Dorsolateral prefrontal cortex (tissue), 120 donors: ENCODE measurements at regions of chr17 and their contacts with region 1.

Region 1: DNA sequence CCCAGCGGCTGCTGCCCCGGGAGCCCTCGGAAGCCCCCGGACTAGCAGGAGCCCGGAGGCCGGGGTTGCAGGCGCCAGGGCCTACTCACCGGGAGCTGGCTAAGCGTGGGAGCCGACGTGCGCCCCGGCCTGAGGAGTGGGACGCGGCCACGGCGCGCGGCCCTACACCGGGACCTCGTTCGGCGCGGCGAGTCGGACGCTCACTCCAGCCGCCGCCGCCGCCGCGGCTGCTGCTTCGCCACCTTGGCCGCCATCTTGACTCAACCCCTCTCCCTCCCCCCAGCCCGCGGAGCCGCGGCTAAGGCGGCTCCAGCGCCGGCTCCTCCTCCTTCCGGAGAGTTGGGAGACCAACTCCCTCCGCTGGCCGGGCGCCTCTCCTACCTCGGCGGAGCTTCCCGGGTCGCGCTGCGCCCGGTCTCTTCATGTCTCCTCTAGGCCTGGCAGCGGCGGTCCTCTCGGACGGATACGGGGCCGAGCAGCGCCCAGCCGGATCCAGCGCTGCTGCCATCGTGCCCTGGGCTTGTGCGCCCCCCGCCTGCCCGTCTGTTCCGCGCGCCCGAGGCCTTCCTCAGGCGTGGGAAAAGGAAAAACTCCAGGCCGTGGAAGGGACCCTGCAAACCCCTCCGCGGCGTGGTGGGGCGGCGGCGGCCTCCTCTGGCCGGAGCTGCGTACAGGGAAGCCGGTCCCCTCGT is at the start of gene NCOR1:
- DNase-seq: peak; percentile 76 to 92 (median 88)
- H3K4me3 ChIP-seq: peak within 1 kb of the TSS; percentile 65 to 100 (median 96)
- H3K27ac ChIP-seq: peak within 1 kb of the TSS; percentile 76 to 99 (median 97)
- H3K27me3 ChIP-seq: no peaks in the 10 kb centered on the region
- CTCF ChIP-seq: peak in 51 of 56 donors; percentile 13 to 69 (median 45)
- total RNA-seq, gene NCOR1: 122 to 199 (median 161) TPM

Region 2: GRCh38 chr17:15999439-16000350 is 215.7 kb before region 1 on chr17 and contains the starts of genes TTC19 and ZSWIM7:
- intact Hi-C with region 1: loop called (anchors 1 to 5 kb)
- DNase-seq: peak; percentile 97 to 99 (median 98)
- H3K4me3 ChIP-seq: peak within 1 kb of the TSS; percentile 58 to 98 (median 86)
- H3K27ac ChIP-seq: peak within 1 kb of the TSS; percentile 72 to 99 (median 97)
- H3K27me3 ChIP-seq: no peaks in the 10 kb centered on the region
- CTCF ChIP-seq: peak in 38 of 56 donors; percentile 4 to 56 (median 33)
- total RNA-seq, gene TTC19: 45.3 to 87.4 (median 67.2) TPM
- total RNA-seq, gene ZSWIM7: 12.9 to 53.0 (median 25.6) TPM

Region 3: GRCh38 chr17:16117149-16117548 is 98.3 kb before region 1 on chr17:
- intact Hi-C with region 1: loop called in 1 of 2 experiments (anchors 10 kb)
- DNase-seq: no peak
- H3K4me3 ChIP-seq: no peak overlapping the region
- H3K27ac ChIP-seq: no peak overlapping the region
- H3K27me3 ChIP-seq: no peaks in the 10 kb centered on the region
- CTCF ChIP-seq: no peak

Region 4: DNA sequence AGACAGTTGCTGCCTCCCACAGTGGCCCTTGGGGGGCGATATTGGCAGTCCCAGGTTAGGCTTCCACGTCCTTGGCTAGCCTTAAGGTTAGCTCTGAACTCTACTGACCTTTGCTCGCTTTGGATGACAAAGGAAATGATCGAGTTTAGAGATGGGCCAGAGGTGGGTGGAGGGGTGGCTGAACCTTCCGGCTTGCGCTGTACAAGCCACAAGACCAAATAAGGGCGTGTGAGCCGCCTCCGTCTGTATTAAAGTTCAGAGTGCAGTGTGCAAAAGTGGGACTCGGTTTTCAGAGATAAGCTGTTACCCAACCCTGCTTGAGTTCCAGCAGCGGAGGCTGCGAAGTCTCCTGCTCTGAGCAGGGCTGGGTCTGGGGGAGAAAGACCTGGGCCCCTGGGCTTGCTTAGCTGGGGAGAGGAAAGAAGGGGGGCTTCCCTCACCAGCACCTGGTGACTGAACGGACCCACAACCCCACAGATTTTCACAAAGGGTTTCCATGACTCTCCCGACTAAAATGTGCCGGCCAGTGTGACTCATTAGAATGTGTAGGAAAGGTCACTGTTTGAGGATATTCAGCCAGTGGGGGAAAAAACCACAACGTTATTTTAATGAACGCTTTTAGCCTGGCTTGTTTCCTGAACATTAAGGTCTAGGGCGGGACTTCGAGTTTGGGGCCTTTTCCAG is 70.7 kb after region 1 on chr17:
- intact Hi-C with region 1: loop called in 1 of 2 experiments (anchors 5 kb)
- DNase-seq: peak in 2 of 10 donors; percentile 12 to 31
- H3K4me3 ChIP-seq: peak overlapping the region in 8 of 59 donors; percentile 1 to 19 (median 10)
- H3K27ac ChIP-seq: peak overlapping the region in 56 of 59 donors; percentile 7 to 90 (median 79)
- H3K27me3 ChIP-seq: no peaks in the 10 kb centered on the region
- CTCF ChIP-seq: peak in 3 of 56 donors; percentile 6 to 17 (median 13)

Region 5: GRCh38 chr17:16353317-16354174 is 138.1 kb after region 1 on chr17 and contains the start of gene CENPV:
- intact Hi-C with region 1: loop called (anchors 10 kb)
- DNase-seq: peak in 6 of 10 donors; percentile 16 to 49 (median 30)
- H3K4me3 ChIP-seq: peak within 1 kb of the TSS; percentile 51 to 86 (median 75)
- H3K27ac ChIP-seq: peak within 1 kb of the TSS in 54 of 59 donors; percentile 40 to 90 (median 76)
- H3K27me3 ChIP-seq: no peaks in the 10 kb centered on the region
- CTCF ChIP-seq: peak in 9 of 56 donors; percentile 8 to 31 (median 17)
- total RNA-seq, gene CENPV: 24.6 to 89.3 (median 51.6) TPM

Region 6: DNA sequence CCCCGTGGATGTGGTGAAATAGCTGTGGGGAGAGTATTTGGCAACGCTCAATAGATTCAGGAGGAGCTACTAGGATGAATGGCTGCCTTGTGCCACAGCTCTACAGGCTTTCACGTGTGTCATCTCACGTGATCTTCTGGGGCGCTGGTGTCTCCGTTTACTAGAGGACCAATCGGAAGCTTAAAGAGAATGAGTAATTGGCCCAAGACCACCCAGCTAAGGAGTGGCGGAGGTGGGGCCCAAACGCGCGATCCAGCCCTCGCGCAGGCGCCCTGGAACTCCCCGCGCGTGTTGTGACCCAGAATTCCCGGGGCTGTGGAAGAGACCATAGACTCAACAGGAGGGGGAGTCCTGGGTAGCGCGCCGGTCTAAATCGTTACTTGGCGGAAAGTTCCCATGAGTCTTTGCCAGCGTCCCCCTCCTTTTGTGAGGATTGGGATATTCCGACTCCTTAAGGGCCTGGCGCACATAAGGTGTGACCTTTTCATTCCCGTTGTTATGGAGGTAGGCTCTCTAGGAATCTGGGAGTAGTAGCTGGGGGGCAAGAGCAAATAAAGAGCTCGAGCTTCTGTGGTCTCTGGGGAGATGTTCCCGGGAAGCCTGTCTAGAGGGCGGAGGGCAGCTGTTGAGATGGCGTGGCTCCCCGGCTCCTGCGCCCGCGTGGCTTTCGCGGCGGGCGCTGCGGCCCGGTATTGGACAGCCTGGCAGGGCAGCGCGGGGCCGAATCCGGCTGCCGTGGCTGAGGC is 223.3 kb after region 1 on chr17:
- intact Hi-C with region 1: loop called in 1 of 2 experiments (anchors 5 kb)
- DNase-seq: peak; percentile 86 to 99 (median 95)
- H3K4me3 ChIP-seq: peak overlapping the region; percentile 71 to 100 (median 92)
- H3K27ac ChIP-seq: peak overlapping the region; percentile 77 to 98 (median 95)
- H3K27me3 ChIP-seq: no peaks in the 10 kb centered on the region
- CTCF ChIP-seq: peak in 19 of 56 donors; percentile 3 to 55 (median 19)